HAP-1 (cell line): ENCODE measurements at regions of chr5 and their contacts with region 1.

Region 1: DNA sequence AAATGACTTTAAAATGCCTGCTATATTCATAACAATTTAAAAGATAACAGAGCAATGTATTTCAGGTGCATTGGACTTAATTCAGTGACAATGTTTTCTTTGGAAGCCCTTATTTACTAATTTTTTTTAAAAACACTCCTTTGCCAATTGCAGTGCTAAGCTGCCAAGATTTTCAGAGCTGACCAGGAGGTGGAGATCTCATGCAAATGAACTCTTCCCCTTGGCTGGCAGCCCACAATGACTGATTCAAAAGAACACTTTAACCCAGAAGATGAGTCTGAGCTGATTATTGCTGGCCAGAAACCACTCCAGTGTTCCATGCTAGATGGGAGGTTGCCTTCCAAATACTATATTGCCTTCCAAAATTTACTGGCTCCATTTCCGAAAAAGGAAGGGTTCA is 128.3 kb upstream of the CCNH start:
- DNase-seq: peak; percentile 63 to 77
- H3K4me3 ChIP-seq: no peak overlapping the region
- H3K4me1 ChIP-seq: peaks cover 25% of the 10 kb centered on the region
- H3K27me3 ChIP-seq: no peaks in the 10 kb centered on the region

Region 2: GRCh38 chr5:87048156-87048555 is 492.9 kb before region 1 on chr5:
- in situ Hi-C with region 1: no loop called
- DNase-seq: no peak
- H3K4me3 ChIP-seq: no peak overlapping the region
- H3K4me1 ChIP-seq: no peaks in the 10 kb centered on the region
- H3K27me3 ChIP-seq: no peaks in the 10 kb centered on the region

Region 3: DNA sequence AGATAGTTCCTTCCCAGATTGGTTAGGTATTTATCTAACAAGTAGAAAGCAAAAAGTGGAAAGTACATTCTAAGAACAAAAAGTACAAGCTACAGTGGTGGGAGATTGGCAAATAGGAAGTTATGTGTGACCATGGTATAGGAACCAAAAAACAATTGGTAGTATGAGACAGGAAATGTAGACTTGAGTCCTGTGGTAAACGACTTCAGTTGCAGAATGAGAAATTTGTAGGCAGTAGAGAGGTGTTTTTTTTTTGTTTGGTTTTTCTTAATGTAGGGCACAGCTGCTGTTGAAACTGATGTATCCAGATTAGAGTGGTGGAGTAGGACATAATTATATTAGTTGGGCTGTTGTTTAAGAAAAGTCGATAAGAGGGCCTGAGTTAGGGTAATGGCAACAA is 200.3 kb before region 1 on chr5:
- in situ Hi-C with region 1: no loop called
- DNase-seq: no peak
- H3K4me3 ChIP-seq: no peak overlapping the region
- H3K4me1 ChIP-seq: no peaks in the 10 kb centered on the region
- H3K27me3 ChIP-seq: no peaks in the 10 kb centered on the region

Region 4: GRCh38 chr5:87754009-87754757 is 213.2 kb after region 1 on chr5:
- in situ Hi-C with region 1: loop called (anchors 10 kb)
- DNase-seq: peak; percentile 67 to 92
- H3K4me3 ChIP-seq: no peak overlapping the region
- H3K4me1 ChIP-seq: peaks cover 18% of the 10 kb centered on the region
- H3K27me3 ChIP-seq: no peaks in the 10 kb centered on the region